A673 (cell line): ENCODE measurements at regions of chr17 and their contacts with region 1.

Region 1: DNA sequence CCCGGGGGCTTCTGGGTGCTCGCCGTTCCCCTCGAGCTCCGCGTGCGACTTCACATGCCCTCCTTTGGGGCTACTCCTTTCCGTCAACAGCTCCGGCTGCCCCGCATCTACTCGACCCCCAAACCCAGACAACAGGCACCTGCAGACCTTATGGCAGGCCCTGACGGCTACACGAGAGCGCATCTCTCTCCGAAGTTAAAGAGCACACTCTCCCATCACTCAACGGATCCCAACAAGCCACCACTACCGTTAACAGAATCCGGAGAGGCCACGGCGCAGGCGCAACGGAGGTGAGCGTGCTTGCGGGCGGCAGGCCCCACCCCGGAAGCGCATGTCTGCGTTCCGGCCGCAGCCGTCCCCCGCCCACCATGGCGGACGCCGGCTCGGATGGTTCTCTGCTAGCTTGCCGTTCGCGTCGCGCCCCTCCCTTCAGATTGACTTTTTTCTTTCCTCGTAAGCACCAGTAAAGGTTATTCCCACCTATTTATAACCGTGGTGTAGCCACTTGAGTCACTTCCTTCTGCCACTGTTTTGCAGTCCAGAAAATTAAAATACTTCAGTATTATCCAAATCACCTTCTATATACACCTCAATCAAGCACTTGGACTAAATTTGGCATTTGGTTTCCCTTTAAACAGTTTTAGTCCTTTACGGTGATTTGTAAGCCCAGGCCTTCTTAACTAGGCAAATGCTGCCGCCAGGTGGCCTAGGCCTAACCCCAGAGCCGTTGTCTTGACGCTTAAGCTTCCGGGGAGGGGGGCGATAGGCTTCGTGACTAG is at the start of gene POLG2:
- DNase-seq: peak; percentile 97
- H3K4me3 ChIP-seq: peak within 1 kb of the TSS; percentile 88
- H3K27ac ChIP-seq: peak within 1 kb of the TSS; percentile 84
- H3K4me1 ChIP-seq: peaks cover 15% of the 10 kb centered on the region
- H3K27me3 ChIP-seq: no peaks in the 10 kb centered on the region
- CTCF ChIP-seq: peak; percentile 58
- total RNA-seq, gene POLG2: 25.6 and 31.5 TPM in 2 replicates

Region 2: DNA sequence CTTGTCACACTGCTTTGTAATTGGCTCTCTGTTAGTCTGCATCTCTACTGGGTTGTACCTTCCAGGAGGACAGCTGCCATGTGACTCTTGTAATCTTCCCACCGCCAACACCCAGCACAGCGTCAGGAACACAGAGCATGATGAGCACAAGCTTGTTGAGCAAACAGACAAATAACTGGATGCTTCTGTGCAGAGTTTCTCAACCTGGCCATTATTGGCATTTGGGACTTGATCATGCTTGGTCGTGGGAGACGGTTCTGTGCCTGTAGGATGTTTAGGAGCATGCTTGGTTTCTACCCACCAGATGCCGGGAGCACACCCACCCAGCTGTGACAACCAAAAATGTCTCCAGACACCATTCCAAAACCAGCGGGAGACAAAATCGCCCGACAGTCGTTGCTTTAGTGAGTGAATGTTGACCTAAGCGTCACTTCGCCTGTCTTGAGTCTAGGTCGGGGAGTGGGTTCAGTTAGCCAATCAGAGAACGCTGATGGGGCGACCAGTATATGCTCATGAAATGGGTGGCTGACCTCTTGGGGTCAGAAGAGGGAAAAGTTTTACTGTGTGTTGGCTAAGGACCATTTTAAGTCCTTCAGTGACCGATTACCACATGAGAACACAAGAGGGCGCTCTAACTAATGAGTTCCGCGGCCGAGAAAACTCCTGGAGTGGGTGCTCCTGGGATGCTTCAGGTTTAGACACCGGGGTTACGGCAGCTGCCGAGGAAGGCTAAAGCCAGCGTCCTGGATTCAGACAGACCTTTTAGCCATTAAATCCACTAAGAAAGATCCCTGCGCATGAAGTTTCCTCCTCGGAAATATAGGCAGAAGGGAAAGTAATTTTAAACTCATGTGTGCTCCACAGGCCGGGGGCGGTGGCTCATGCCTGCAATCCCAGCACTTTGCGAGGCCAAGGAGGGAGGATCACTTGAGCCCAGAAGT is 176.1 kb before region 1 on chr17:
- CTCF ChIA-PET with region 1: no interaction called
- POLR2A ChIA-PET with region 1: interaction called, 10 read pairs
- intact Hi-C with region 1: no loop called
- DNase-seq: peak; percentile 85
- H3K4me3 ChIP-seq: no peak overlapping the region
- H3K27ac ChIP-seq: no peak overlapping the region
- H3K4me1 ChIP-seq: no peaks in the 10 kb centered on the region
- H3K27me3 ChIP-seq: no peaks in the 10 kb centered on the region
- CTCF ChIP-seq: peak; percentile 88

Region 3: DNA sequence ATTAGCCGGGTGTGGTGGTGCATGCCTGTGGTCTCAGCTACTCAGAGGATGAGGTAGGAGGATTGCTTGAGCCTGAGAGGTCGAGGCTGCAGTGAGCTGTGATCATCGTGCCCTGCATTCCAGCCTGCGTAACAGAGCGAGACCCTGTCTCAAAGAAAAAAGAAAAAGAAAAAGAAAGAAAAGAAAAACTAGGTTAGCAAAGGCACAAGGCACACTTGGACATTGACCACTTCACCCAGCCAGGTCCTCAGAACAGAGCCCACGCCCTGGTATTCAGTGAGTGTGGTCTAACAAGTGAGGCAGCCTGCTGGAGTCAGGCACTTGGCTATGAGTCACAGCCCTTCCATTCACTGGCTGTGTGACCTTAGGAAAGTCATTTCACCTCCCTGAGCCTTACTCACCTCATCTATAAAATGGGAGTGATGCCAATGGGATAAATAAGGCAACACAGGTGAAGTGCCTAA is 37.7 kb before region 1 on chr17:
- CTCF ChIA-PET with region 1: no interaction called
- POLR2A ChIA-PET with region 1: no interaction called
- intact Hi-C with region 1: no loop called
- DNase-seq: no peak
- H3K4me3 ChIP-seq: no peak overlapping the region
- H3K27ac ChIP-seq: no peak overlapping the region
- H3K4me1 ChIP-seq: no peaks in the 10 kb centered on the region
- H3K27me3 ChIP-seq: no peaks in the 10 kb centered on the region
- CTCF ChIP-seq: no peak

Region 4: GRCh38 chr17:64580384-64581315 is 83.7 kb after region 1 on chr17:
- CTCF ChIA-PET with region 1: no interaction called
- POLR2A ChIA-PET with region 1: interaction called, 10 read pairs
- intact Hi-C with region 1: no loop called
- DNase-seq: no peak
- H3K4me3 ChIP-seq: no peak overlapping the region
- H3K27ac ChIP-seq: no peak overlapping the region
- H3K4me1 ChIP-seq: no peaks in the 10 kb centered on the region
- H3K27me3 ChIP-seq: no peaks in the 10 kb centered on the region
- CTCF ChIP-seq: no peak

Region 5: DNA sequence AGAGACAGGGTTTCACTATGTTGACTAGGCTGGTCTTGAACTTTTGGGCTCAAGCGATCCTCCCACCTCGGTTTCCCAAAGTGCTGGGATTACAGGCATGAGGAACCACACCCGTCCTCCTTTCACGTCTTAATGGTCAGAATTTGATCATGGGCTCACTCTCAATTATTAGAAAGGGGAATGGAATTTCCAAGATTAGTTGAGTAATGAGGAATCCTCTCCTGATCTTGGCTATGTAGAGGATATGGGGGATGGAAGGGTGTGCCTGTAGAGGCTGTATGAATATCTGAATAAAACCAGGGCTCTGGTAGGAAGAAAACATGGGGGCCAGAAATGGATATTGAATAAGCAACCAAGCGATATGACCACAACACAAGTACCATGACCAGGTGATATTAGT is 191.0 kb after region 1 on chr17:
- CTCF ChIA-PET with region 1: no interaction called
- POLR2A ChIA-PET with region 1: no interaction called
- intact Hi-C with region 1: no loop called
- DNase-seq: no peak
- H3K4me3 ChIP-seq: no peak overlapping the region
- H3K27ac ChIP-seq: no peak overlapping the region
- H3K4me1 ChIP-seq: no peaks in the 10 kb centered on the region
- H3K27me3 ChIP-seq: no peaks in the 10 kb centered on the region
- CTCF ChIP-seq: no peak